Activated CD4-positive, alpha-beta memory T cell treated with anti-CD3 and anti-CD28 coated beads, Interleukin-2, amount 10 ng/mL, durations not matched to agents 7 days and 5 days (primary cell): ENCODE measurements at regions of chr5 and their contacts with region 1.

Region 1: DNA sequence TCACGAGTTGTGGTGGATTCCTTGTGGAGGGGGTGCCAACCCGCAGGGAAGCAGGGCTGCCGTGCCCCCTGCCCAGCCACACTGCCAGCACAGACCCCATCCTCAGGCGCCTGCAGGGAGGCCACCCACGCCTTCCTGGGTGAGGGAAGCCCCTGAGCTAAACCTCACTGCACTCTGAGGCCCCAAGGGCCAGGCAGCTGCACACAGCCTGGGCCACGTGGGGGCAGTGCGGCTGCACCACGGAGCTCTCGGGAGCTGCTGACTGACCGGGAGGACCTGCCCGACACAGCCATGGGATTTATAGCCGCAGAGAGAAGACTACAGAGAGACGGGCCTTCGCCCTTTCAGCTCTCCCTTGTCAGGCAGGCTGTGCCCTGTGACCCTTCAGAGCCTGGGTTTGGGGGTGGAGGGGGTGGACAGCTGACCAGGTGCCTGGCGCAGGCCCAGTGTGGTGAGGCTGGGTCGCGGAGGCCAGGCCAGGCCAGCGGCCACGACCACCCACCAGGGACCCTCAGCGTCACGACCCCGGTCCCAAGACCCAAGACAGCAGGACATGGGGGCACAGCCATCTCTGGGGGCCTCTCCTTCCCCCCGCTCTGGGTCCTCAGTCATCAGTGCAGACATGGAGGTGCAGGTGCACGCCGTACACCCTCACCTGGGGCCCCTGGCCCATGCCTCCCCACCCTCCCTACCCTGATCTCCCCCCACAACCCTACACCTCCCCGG is 4.3 kb upstream of the AHRR start:
- DNase-seq: peak; percentile 61
- H3K4me3 Mint-ChIP-seq: no peak overlapping the region
- H3K27ac Mint-ChIP-seq: no peak overlapping the region
- H3K4me1 Mint-ChIP-seq: peaks cover 9% of the 10 kb centered on the region
- H3K27me3 Mint-ChIP-seq: peaks cover 18% of the 10 kb centered on the region

Region 2: GRCh38 chr5:424301-425110 is 107.3 kb after region 1 on chr5:
- CTCF ChIA-PET with region 1: interaction called, 16 read pairs
- POLR2A ChIA-PET with region 1: interaction called, 3 read pairs
- DNase-seq: no peak
- H3K4me3 Mint-ChIP-seq: no peak overlapping the region
- H3K27ac Mint-ChIP-seq: peak overlapping the region; percentile 35
- H3K4me1 Mint-ChIP-seq: peaks cover 23% of the 10 kb centered on the region
- H3K27me3 Mint-ChIP-seq: no peaks in the 10 kb centered on the region

Region 3: DNA sequence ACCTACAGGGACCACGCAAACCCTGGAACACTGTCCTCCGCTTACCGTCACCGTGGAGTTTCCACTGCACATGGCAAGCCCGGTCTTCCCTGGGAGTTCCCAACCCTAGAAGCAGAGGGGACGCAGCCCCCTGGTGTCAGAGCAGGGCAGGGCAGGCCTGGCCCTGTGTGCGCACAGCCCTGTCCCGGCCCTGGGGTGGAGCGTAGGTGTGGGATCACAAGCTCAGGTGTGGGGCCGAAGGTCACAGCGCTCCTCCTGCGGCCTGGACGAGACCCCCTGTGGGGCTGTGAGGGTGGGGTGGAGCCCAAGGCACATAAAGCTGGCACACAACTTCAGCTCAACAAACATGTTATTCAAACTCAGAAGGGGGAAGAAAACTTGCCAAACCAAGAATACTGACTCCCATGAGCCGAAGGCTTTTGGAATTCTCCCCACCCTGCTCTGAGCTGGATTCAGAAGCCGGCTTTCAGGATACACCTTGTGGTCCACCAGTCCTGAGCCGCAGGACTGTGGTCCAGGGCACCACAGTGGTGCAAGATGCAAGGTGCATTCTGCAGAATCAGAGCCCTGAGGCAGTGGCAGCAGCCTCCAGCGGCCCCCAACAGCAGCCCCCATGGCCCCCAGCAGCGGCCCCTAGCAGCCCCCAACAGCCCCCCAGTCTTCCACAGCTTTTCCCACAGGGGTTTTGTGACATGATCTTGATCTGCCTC is 113.9 kb after region 1 on chr5:
- CTCF ChIA-PET with region 1: interaction called, 34 read pairs
- POLR2A ChIA-PET with region 1: interaction called, 5 read pairs
- DNase-seq: peak; percentile 48
- H3K4me3 Mint-ChIP-seq: no peak overlapping the region
- H3K27ac Mint-ChIP-seq: no peak overlapping the region
- H3K4me1 Mint-ChIP-seq: peaks cover 3% of the 10 kb centered on the region
- H3K27me3 Mint-ChIP-seq: no peaks in the 10 kb centered on the region

Region 4: DNA sequence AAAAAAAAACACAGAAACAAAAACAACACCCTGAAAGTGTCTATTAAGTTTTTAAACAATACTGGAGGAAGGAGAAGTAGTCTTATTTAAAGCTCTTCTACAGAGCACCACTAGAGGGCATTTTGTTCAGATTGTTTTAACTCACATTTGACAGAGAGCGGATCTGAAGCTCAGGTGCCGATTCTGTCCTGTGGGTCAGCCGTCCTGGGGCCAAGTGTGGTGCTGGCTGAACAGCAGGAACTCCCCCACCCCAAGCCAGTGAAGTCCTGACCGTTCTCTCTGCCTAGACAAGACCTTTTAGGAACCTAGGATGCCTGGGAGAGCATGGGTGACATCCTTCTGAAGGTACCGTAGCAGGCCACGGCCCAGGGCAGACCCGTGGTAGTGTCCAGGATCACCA is 129.6 kb after region 1 on chr5:
- CTCF ChIA-PET with region 1: interaction called, 10 read pairs
- POLR2A ChIA-PET with region 1: interaction called, 6 read pairs
- DNase-seq: no peak
- H3K4me3 Mint-ChIP-seq: no peak overlapping the region
- H3K27ac Mint-ChIP-seq: no peak overlapping the region
- H3K4me1 Mint-ChIP-seq: peaks cover 30% of the 10 kb centered on the region
- H3K27me3 Mint-ChIP-seq: no peaks in the 10 kb centered on the region

Region 5: DNA sequence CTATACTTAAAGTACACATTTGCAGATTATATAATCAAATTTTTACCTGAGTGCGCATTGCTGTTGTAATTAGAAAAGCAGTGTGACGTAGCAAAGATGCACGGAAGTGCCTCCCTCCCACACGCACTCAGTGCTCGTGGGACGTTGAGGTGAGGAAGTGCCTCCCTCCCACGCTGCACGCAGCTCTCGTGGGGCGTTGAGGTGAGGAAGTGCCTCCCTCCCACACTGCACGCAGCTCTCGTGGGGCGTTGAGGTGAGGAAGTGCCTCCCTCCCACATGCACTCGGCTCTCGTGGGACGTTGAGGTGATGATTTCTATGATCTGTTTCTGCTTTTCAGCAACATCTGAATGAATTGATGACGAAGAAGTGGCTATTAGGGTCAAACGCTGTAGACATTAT is 146.7 kb after region 1 on chr5:
- CTCF ChIA-PET with region 1: no interaction called
- POLR2A ChIA-PET with region 1: no interaction called
- DNase-seq: peak; percentile 63
- H3K4me3 Mint-ChIP-seq: no peak overlapping the region
- H3K27ac Mint-ChIP-seq: peak overlapping the region; percentile 65
- H3K4me1 Mint-ChIP-seq: peaks cover 43% of the 10 kb centered on the region
- H3K27me3 Mint-ChIP-seq: no peaks in the 10 kb centered on the region

Region 6: DNA sequence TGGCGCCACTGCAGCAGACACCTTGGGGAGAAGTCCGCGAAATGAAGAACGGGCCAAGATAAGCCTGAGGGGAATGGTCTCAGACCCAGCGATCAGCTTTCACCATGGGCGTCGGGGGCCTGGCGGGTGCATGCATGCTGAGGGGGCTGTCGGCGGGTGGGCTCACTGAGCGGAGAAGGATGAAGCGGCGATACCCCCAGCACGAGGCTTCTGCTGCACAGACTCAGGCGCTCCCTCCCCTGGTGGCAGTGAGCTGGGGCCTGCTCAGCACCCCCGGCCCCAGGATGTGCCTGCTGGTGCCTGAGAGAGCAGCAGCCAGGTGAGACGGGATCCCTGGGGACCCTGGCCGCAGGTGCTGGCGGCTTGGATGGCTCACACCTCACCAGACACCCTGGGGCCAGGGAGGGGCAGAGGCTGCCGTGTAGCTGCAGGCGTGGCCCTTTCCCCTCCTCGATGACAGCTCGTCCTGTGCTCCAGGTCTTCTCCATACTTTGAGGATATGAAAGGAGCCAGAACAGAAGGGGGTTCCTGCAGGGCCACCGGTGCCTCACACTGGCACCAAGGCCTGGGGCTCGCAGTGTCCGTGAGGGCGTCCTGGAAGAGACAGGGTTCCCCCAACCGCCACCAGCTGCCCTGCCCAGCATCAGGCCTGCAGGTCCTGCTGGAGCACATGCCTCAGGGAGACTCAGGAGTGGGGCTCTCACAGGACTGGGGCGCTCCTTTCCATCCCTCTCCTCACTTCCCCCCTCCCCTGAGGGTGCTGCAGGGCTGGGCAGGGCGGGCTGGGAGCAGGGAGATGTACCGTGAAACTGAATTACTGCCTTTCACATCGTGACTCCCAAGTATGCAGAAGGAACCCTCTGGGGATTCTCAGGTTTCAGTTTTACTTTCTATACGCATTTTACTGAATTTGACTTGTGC is 326.4 kb after region 1 on chr5:
- CTCF ChIA-PET with region 1: no interaction called
- POLR2A ChIA-PET with region 1: no interaction called
- DNase-seq: no peak
- H3K4me3 Mint-ChIP-seq: no peak overlapping the region
- H3K27ac Mint-ChIP-seq: peak overlapping the region; percentile 31
- H3K4me1 Mint-ChIP-seq: peaks cover 2% of the 10 kb centered on the region
- H3K27me3 Mint-ChIP-seq: no peaks in the 10 kb centered on the region